Psoas muscle (tissue), 8 donors: ENCODE measurements at regions of chr16 and their contacts with region 1.

Region 1: GRCh38 chr16:69796351-69797118 is 34.4 kb downstream of the WWP2 start:
- DNase-seq: no peak
- ATAC-seq: peak; percentile 86 to 94 (median 89)
- H3K4me3 ChIP-seq: peak overlapping the region; percentile 45
- H3K27ac ChIP-seq: no peak overlapping the region
- H3K4me1 ChIP-seq: no peaks in the 10 kb centered on the region
- H3K27me3 ChIP-seq: no peaks in the 10 kb centered on the region
- CTCF ChIP-seq: peak; percentile 95

Region 2: GRCh38 chr16:69064764-69065313 is 731.7 kb before region 1 on chr16:
- intact Hi-C with region 1: no loop called
- DNase-seq: peak; percentile 38 to 81
- ATAC-seq: peak; percentile 87 to 91 (median 89)
- H3K4me3 ChIP-seq: peak overlapping the region; percentile 27
- H3K27ac ChIP-seq: peak overlapping the region; percentile 82
- H3K4me1 ChIP-seq: peaks cover 25% of the 10 kb centered on the region
- H3K27me3 ChIP-seq: no peaks in the 10 kb centered on the region
- CTCF ChIP-seq: no peak

Region 3: GRCh38 chr16:69859105-69859989 is 62.8 kb after region 1 on chr16:
- intact Hi-C with region 1: loop called (anchors 1 to 2 kb)
- DNase-seq: no peak
- ATAC-seq: peak; percentile 50 to 67 (median 60)
- H3K4me3 ChIP-seq: no peak overlapping the region
- H3K27ac ChIP-seq: peak overlapping the region; percentile 61
- H3K4me1 ChIP-seq: peaks cover 18% of the 10 kb centered on the region
- H3K27me3 ChIP-seq: no peaks in the 10 kb centered on the region
- CTCF ChIP-seq: peak; percentile 41

Region 4: GRCh38 chr16:69930117-69930776 is 133.7 kb after region 1 on chr16:
- intact Hi-C with region 1: loop called (anchors 1 to 2 kb)
- DNase-seq: peak; percentile 44 to 69
- ATAC-seq: peak; percentile 60 to 84 (median 72)
- H3K4me3 ChIP-seq: no peak overlapping the region
- H3K27ac ChIP-seq: no peak overlapping the region
- H3K4me1 ChIP-seq: peaks cover 11% of the 10 kb centered on the region
- H3K27me3 ChIP-seq: no peaks in the 10 kb centered on the region
- CTCF ChIP-seq: peak; percentile 72